Left ventricle myocardium inferior (tissue), 1 donor: ENCODE measurements at regions of chr9 and their contacts with region 1.

Region 1: GRCh38 chr9:127869310-127870152 is 7.9 kb downstream of the AK1 start:
- DNase-seq: peak; percentile 89
- H3K4me3 ChIP-seq: no peak overlapping the region
- H3K27ac ChIP-seq: peak overlapping the region; percentile 97
- H3K4me1 ChIP-seq: peaks cover 86% of the 10 kb centered on the region
- H3K27me3 ChIP-seq: no peaks in the 10 kb centered on the region
- CTCF ChIP-seq: peak; percentile 93

Region 2: GRCh38 chr9:127793093-127793708 is 76.3 kb before region 1 on chr9:
- intact Hi-C with region 1: loop called (anchors 5 kb)
- DNase-seq: no peak
- H3K4me3 ChIP-seq: no peak overlapping the region
- H3K27ac ChIP-seq: peak overlapping the region; percentile 46
- H3K4me1 ChIP-seq: peaks cover 62% of the 10 kb centered on the region
- H3K27me3 ChIP-seq: no peaks in the 10 kb centered on the region
- CTCF ChIP-seq: no peak

Region 3: GRCh38 chr9:127980706-127981558 is 111.4 kb after region 1 on chr9 and contains the start of gene EEIG1:
- intact Hi-C with region 1: no loop called
- DNase-seq: peak; percentile 97
- H3K4me3 ChIP-seq: peak within 1 kb of the TSS; percentile 91
- H3K27ac ChIP-seq: peak within 1 kb of the TSS; percentile 95
- H3K4me1 ChIP-seq: peaks cover 75% of the 10 kb centered on the region
- H3K27me3 ChIP-seq: no peaks in the 10 kb centered on the region
- CTCF ChIP-seq: no peak
- total RNA-seq, gene EEIG1: 20.7 TPM

Region 4: DNA sequence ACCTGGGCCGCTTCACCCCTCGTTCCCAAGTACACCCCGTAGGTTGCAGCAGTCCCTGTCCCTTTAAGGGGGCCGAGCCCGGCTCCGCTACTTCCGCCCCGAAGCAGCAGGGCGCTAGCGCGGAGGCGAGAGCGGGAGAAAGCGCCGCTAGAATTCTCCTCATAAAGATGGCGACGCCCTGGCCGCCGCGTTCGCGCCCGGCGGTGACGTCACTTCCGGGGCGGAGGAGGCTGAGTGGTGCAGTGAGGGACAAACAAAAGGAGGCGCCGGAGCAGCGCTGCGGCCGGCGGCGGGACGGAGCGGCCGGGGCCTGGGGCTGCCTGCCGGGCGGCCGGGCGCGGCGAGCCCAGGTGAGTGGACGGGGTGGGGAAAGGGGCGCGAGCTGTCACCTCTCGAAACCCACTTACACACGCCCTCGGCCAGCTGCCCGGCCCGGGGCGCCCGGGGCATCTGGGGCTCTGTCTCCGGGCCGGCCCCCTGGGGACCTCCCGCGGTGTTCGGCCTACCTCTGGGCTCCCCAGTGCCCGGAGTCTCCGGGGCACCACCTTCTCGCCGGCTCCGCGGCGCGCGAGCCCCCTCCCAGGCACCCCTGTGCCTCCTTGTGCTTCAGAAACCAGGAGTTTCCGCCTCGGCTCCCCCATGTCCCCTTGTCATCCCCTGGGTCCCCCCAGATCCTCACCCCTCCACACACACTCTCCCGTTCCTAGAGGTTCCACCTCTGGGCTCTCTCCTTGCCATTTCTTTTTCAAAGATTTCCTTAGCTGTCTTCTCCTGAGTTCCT is 1012.6 kb after region 1 on chr9 and contains the starts of genes KYAT1 and LRRC8A:
- intact Hi-C with region 1: no loop called
- DNase-seq: peak; percentile 98
- H3K4me3 ChIP-seq: peak within 1 kb of the TSS; percentile 94
- H3K27ac ChIP-seq: peak within 1 kb of the TSS; percentile 98
- H3K4me1 ChIP-seq: peaks cover 95% of the 10 kb centered on the region
- H3K27me3 ChIP-seq: no peaks in the 10 kb centered on the region
- CTCF ChIP-seq: peak; percentile 27
- total RNA-seq, gene KYAT1: 12.1 TPM
- total RNA-seq, gene LRRC8A: 19.8 TPM